Lower leg skin (tissue), 4 donors: ENCODE measurements at regions of chr14 and their contacts with region 1.

Region 1: DNA sequence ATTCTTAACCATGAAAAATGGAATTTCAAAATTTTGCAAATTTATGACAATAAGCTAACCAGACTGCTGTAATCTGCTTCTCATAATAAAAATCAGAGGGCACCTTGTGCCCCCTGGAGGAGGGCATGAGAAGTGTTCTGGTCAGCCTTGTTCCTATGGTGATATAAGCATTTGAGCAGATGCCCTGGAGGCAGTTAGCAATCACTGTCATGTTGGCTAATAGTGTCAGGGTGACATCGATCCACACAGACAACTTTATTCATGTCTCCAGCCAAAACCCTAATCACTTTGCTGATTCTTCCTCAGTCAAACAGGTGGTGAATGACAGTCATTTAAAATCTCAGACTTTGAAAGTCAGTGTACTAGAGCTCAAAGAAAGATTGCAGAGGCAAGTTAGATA is 943.0 kb downstream of the GALC start:
- DNase-seq: no peak
- H3K4me3 ChIP-seq: no peak overlapping the region
- CTCF ChIP-seq: no peak
- POLR2A ChIP-seq: no peak

Region 2: DNA sequence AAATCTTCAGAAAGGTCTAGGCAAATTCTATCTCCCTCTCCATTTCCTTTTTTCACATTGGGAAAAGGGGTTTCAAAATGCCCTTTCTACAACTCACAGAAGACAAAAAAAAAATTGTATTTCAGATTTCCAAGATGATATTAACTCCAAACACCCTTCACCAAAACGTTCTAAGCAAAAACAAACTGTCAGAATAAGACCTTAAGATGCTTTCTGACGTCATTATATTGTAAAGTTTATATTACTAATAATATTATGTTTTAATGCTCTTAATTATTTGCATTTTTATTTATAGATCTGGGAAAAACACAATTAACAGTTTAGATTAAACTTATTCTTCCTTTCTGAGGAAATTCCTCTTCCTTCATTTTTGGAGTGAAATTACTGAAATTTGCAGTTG is 318.8 kb after region 1 on chr14:
- intact Hi-C with region 1: loop called (anchors 10 kb)
- DNase-seq: no peak
- H3K4me3 ChIP-seq: no peak overlapping the region
- CTCF ChIP-seq: no peak
- POLR2A ChIP-seq: no peak